SK-N-SH (cell line): ENCODE measurements at regions of chr11 and their contacts with region 1.

Region 1: GRCh38 chr11:73184953-73185671 is 33.0 kb upstream of the P2RY2 start:
- DNase-seq: peak; percentile 77
- H3K4me3 ChIP-seq: no peak overlapping the region; a peak in 1 of 4 replicates
- H3K27ac ChIP-seq: no peak overlapping the region
- H3K4me1 ChIP-seq: peaks cover 0 to 12% of the 10 kb centered on the region in 2 experiments; a peak in 3 of 4 replicates
- H3K27me3 ChIP-seq: no peaks in the 10 kb centered on the region
- CTCF ChIP-seq: peak; percentile 71
- EP300 ChIP-seq: no peak
- RAD21 ChIP-seq: peak; percentile 74

Region 2: DNA sequence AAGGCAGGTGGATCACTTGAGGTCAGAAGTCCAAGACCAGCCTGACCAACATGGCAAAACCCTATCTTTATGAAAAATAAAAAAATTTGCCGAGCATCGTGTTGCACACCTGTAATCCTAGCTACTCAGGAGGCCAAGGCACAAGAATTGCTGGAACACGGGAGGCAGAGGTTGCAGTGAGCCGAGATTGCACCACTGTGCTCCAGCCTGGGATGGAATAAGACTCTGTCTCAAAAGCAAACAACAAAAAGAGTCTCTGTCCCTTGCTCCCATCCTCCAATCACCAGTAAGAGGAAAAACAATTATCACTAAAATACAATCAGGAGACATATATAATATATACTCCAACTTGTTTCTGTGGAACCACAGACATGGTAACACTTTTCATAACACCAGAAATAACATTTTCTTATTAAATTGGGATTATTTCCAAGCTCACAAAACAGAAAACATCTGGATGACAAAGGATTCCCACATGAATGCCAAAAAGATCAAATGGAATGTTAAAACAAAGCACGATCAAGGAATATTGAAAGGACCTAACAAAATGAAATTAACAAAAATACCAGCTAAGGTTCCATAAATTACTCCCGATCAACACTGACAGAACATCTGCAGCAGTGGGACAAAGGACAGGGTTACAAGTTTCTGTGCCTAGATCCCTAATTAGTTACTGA is 58.2 kb before region 1 on chr11:
- CTCF ChIA-PET with region 1: no interaction called
- POLR2A ChIA-PET with region 1: no interaction called
- DNase-seq: no peak
- H3K4me3 ChIP-seq: no peak overlapping the region
- H3K27ac ChIP-seq: no peak overlapping the region; a peak in 1 of 4 replicates
- H3K4me1 ChIP-seq: no peaks in the 10 kb centered on the region; a peak in 3 of 4 replicates
- H3K27me3 ChIP-seq: no peaks in the 10 kb centered on the region
- CTCF ChIP-seq: no peak
- EP300 ChIP-seq: no peak
- RAD21 ChIP-seq: no peak

Region 3: GRCh38 chr11:73195231-73195992 is 10.3 kb after region 1 on chr11:
- CTCF ChIA-PET with region 1: interaction called, 14 read pairs
- POLR2A ChIA-PET with region 1: no interaction called
- DNase-seq: no peak
- H3K4me3 ChIP-seq: no peak overlapping the region
- H3K27ac ChIP-seq: no peak overlapping the region
- H3K4me1 ChIP-seq: no peaks in the 10 kb centered on the region; a peak in 1 of 4 replicates
- H3K27me3 ChIP-seq: no peaks in the 10 kb centered on the region
- CTCF ChIP-seq: no peak
- EP300 ChIP-seq: no peak
- RAD21 ChIP-seq: no peak

Region 4: DNA sequence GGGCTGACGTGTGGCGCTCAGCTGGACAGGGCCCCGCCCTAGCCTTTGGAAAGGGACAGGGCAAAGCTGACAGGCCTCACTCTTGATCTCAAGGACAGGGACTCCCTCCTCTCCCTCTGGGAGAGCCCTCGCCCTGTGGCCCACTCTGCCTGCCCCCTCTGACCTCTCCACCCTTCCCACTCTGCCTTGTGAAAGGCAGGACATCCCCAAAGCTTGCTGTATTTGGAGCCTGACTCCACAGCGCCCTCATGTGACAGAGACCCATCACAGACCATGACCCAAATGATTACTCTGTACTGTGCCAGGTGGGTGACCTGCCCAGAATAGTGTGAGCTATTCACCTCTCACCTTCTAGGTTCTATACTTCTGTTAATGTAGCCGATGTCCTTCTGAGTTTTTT is 51.7 kb after region 1 on chr11:
- CTCF ChIA-PET with region 1: interaction called, 53 read pairs
- POLR2A ChIA-PET with region 1: no interaction called
- DNase-seq: peak; percentile 63
- H3K4me3 ChIP-seq: no peak overlapping the region; a peak in 1 of 4 replicates
- H3K27ac ChIP-seq: no peak overlapping the region
- H3K4me1 ChIP-seq: peaks cover 0 to 7% of the 10 kb centered on the region in 2 experiments; a peak in 1 of 4 replicates
- H3K27me3 ChIP-seq: no peaks in the 10 kb centered on the region
- CTCF ChIP-seq: peak; percentile 62
- EP300 ChIP-seq: no peak
- RAD21 ChIP-seq: peak; percentile 53